ENCODE measurements at regions of chr3 and their contacts with region 1.

Region 1: DNA sequence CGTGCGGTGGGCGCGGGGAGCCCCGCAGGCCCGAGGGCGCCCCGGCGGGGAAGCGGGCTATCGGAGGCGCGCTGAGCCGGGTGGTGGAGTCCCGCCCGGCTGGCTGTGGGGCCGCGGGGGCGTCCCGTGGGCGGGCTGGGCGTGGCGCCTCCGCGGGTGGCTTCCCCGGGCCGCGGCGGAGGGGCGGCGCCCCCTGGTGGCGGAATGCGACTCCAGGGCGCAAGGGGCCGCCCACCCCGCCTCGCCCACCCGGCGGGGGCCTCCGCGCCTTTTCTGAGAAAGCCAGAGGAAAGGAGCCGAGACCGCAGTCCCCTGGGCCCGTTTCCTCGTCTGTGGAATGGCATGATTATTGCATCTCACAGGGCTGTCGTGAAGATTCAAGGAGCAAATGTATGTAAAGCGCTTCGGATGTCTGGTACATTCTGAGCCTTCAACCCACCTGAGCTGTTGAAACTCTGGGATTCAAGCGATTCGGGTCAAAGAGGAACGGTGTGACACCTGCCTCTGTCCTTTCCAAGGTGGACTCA is 31.9 kb upstream of the RAB6B start:
- DNase-seq: peak; percentile 61 to 88
- H3K4me3 ChIP-seq: peak overlapping the region; percentile 53 to 69 (median 58)
- H3K27ac ChIP-seq: peak overlapping the region in 2 of 5 donors; percentile 35 to 62
- H3K4me1 ChIP-seq: peaks cover 0 to 15% (median 9%) of the 10 kb centered on the region in 4 donors
- H3K27me3 ChIP-seq: peaks cover 0 to 12% (median 0%) of the 10 kb centered on the region in 3 donors
- CTCF ChIP-seq: peak in 4 of 7 experiments; percentile 24 to 94 (median 68)
- EP300 ChIP-seq: no peak
- POLR2A ChIP-seq: no peak

Region 2: DNA sequence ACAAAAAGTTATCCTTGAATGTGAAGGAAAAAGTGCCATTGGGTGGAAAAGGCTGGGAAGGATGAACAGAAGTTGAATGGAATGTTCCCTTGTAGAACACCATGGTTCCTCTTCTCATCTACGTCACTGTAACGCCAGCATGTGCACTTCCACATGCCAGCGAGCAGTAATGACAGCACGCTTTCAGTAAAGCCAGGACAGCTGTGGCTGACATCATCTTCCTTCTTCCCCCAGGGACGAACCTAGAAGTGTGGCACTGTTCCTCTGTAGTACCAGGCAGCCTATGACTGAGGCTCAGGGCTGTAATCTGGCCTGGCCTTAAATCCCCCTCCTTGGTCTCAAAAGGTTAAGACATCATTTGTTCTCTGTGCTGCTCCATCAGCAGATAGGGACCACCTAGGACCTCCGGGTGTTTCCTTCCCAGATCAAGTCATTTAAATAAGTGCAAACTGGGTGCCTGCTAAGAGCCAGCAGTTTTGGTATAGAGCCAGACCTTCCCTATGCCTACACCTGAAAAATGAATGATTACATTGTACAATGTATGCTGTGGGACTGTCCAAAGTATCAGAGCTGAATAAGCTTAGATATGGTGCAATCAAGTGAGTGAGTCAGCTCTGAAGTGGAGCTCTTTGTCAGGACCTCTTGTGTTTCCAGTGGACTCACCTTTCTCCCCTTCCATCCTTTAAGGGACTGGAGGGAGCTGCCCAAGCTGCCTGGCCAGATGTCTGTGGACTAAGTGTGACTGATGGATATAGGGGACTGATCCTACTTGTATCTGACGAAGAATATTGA is 127.6 kb before region 1 on chr3:
- intact Hi-C with region 1: no loop called
- DNase-seq: peak in 1 of 2 donors; percentile 39
- H3K4me3 ChIP-seq: no peak overlapping the region
- H3K27ac ChIP-seq: no peak overlapping the region
- H3K4me1 ChIP-seq: peaks cover 0 to 13% (median under 1%) of the 10 kb centered on the region in 4 donors
- H3K27me3 ChIP-seq: peaks cover 0 to 4% (median 0%) of the 10 kb centered on the region in 3 donors
- CTCF ChIP-seq: no peak
- EP300 ChIP-seq: no peak
- POLR2A ChIP-seq: no peak

Region 3: DNA sequence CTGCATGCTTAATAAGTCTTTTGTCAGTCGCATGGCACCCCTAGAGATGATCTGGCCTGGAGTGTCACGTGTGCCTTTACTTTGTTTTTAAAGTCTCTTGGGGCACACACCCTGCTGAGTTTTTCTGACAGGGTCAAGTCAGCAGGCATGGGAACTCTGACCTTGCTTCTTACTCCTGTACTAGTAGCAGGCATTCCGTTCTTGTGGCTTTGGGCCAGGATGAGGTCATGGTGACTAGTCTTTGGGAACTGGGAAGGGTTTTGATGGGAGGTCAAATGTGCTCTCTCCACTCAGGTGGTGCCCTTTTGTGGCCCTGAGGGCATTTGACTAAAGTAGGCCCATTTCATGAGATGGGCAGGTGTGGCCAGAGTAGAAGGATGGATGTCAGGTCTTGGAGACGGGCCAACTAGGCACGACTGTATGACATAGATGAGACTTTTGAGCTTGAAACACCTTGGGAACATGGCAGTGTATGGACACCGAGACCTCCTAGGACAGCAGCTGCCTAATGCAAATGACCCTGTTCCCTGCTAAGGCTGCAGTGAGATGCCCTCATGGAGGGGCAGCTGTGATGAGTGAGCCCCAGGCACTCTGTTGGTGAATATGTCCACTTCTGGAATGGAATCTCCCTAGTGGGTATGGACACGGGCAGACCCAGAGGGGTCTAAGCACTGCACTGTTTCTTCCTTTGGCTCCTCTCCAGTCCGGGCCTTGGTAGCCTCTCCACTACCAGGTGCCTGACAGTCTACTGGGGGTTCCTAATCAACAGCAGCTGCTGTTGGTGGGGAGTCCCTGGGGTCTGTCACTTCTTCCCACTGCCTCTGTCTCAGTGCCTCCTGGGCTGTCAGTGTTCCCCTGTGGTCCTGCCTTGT is 105.6 kb before region 1 on chr3:
- intact Hi-C with region 1: loop called (anchors 5 kb)
- DNase-seq: peak; percentile 61 to 88
- H3K4me3 ChIP-seq: no peak overlapping the region
- H3K27ac ChIP-seq: no peak overlapping the region
- H3K4me1 ChIP-seq: peaks cover 0 to 9% (median 4%) of the 10 kb centered on the region in 4 donors
- H3K27me3 ChIP-seq: no peaks in the 10 kb centered on the region
- CTCF ChIP-seq: peak in 1 of 7 experiments; percentile 21
- EP300 ChIP-seq: no peak
- POLR2A ChIP-seq: no peak